ENCODE measurements at regions of chr21 and their contacts with region 1.

Region 1: DNA sequence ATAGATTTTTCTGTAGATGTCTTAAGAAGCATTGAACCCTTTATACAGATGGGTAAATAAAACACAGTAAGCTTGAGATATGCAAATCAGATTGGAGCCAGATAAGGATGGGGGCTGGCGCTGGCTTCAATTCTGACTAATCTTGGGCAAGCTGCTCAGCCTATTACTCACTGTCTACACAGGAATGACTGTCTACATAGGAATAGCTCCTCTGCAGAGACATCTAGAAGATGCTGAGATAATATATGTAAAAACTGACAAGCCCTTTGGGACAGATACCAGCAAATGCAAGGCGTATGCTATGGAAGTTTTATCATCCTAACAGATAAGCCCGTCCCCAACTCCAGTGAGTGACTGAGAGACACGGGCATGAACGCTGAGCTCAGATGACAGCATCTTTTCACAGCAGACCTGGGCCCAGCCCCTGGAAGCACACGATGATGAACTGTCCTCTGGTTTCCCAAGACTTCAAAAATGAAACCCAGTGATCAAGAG is 1.7 kb downstream of the CLDN14 start:
- DNase-seq: peak; percentile 83
- H3K4me3 ChIP-seq: no peak overlapping the region
- H3K27ac ChIP-seq: no peak overlapping the region
- H3K4me1 ChIP-seq: peaks cover 11% of the 10 kb centered on the region
- H3K27me3 ChIP-seq: no peaks in the 10 kb centered on the region
- CTCF ChIP-seq: no peak

Region 2: GRCh38 chr21:36576441-36576840 is 98.2 kb after region 1 on chr21:
- CTCF ChIA-PET with region 1: no interaction called
- dilution Hi-C with region 1: loop called (anchors 5 kb)
- in situ Hi-C with region 1: no loop called
- intact Hi-C with region 1: no loop called
- DNase-seq: no peak
- H3K4me3 ChIP-seq: no peak overlapping the region
- H3K27ac ChIP-seq: no peak overlapping the region
- H3K4me1 ChIP-seq: no peaks in the 10 kb centered on the region
- H3K27me3 ChIP-seq: no peaks in the 10 kb centered on the region
- CTCF ChIP-seq: no peak

Measured in mammary epithelial cell (primary cell).